T-cell (primary cell): ENCODE measurements at regions of chr5 and their contacts with region 1.

Region 1: DNA sequence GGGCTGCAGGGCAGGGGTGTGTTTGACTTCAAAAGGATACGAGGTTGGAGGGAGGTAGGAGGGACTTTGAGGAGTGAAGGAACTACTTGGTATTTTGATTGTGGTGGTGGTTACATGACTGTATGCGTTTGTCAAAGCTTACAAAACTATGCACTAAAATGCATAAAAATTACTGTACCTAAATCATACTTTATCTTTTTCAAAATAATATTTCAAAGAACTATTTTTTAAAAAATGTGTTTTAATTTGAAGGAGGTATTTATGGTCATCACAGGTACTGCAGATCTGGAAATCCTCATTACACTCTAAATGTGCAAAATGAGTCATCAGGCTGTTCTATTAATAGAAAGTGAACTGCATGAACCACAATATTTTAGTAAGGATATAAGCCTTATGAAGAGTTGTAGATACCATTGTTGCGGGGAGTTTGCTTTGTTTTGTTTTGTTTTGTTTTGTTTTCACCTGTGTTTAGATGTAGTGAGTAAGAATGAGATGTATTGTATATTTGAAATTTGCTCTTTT is 116.9 kb downstream of the ARRDC3 start:
- DNase-seq: peak in 1 of 35 experiments; percentile 8
- ATAC-seq: peak; percentile 37 to 57 (median 50)
- H3K4me3 ChIP-seq: no peak overlapping the region
- H3K4me3 Mint-ChIP-seq: no peak overlapping the region
- H3K27ac ChIP-seq: no peak overlapping the region
- H3K27ac Mint-ChIP-seq: peak overlapping the region in 1 of 2 donors; percentile 10
- H3K4me1 ChIP-seq: peaks cover 10 to 14% of the 10 kb centered on the region in 2 experiments
- H3K4me1 Mint-ChIP-seq: peaks cover 16 to 24% (median 20%) of the 10 kb centered on the region in 3 donors
- H3K27me3 ChIP-seq: no peaks in the 10 kb centered on the region
- H3K27me3 Mint-ChIP-seq: no peaks in the 10 kb centered on the region

Region 2: DNA sequence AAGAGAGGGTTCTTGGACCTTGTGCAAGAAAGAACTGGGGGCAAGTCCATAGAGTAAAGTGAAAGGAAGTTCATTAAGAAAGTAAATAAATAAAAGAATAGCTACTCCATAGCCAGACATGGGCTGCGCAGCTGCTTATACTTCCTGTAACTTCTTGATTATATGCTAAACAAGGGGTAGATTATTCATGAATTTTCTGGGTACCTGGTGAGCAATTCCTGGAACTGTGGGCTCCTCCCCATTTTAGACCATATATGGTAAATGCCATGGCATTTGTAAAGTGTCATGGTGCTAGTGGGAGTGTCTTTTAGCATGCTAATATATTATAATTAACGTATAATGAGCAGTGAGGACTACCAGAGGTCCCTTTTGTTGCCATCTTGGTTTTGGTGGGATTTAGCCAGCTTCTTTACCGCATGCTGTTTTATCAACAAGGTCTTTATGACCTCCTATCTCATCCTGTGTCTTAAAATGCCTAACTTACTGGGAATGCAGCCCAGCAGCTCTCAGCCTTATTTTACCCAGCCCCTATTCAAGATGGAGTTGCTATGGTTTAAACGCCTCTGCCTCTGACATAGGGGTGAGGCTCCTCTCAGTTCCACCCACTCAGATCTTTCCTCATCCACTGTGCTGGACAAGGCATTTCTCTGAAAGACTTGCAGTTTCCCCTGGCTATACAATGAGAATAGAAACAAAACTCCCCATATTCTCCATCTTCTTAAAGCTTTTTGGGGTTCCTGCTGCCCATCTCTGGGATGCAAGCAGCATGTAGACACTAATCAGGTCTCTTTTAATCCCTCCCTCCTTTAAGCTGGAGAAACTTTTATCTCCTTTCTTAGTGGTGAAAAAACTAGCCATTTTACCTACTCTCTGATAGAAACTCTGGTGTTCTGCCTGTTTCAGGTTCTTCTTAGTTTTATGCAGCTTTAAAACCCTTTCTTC is 25.7 kb after region 1 on chr5:
- CTCF ChIA-PET with region 1: no interaction called
- POLR2A ChIA-PET with region 1: interaction called in 1 of 2 experiments, 10 read pairs
- DNase-seq: no peak
- ATAC-seq: no peak
- H3K4me3 ChIP-seq: no peak overlapping the region
- H3K4me3 Mint-ChIP-seq: no peak overlapping the region
- H3K27ac ChIP-seq: no peak overlapping the region
- H3K27ac Mint-ChIP-seq: peak overlapping the region in 1 of 2 donors; percentile 2
- H3K4me1 ChIP-seq: no peaks in the 10 kb centered on the region
- H3K4me1 Mint-ChIP-seq: no peaks in the 10 kb centered on the region
- H3K27me3 ChIP-seq: peaks cover 0 to 3% of the 10 kb centered on the region in 2 experiments
- H3K27me3 Mint-ChIP-seq: peaks cover 0 to 2% of the 10 kb centered on the region in 2 donors

Region 3: DNA sequence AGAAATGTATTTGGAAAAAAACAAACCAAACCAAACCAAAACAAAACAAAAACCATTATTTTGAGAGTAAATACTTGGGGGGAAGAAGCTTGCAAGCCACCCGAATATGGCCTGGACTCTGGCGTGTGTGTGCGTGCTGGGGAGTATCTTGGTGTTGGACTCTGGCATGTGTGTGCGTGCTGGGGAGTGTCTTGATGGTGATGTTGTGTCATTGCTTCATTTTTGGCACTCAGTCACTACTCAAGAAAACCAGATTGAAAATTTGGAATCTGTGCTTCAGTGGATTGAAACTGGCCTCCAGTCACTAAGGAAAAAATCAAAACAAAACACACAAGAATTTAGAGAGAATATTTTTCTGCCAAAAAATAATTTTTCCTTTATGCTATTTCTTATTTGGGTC is 40.8 kb after region 1 on chr5:
- CTCF ChIA-PET with region 1: no interaction called
- POLR2A ChIA-PET with region 1: no interaction called
- DNase-seq: no peak
- ATAC-seq: no peak
- H3K4me3 ChIP-seq: no peak overlapping the region
- H3K4me3 Mint-ChIP-seq: no peak overlapping the region
- H3K27ac ChIP-seq: no peak overlapping the region
- H3K27ac Mint-ChIP-seq: no peak overlapping the region
- H3K4me1 ChIP-seq: peaks cover 11 to 22% of the 10 kb centered on the region in 2 experiments
- H3K4me1 Mint-ChIP-seq: peaks cover 15 to 22% (median 21%) of the 10 kb centered on the region in 3 donors
- H3K27me3 ChIP-seq: no peaks in the 10 kb centered on the region
- H3K27me3 Mint-ChIP-seq: no peaks in the 10 kb centered on the region

Region 4: DNA sequence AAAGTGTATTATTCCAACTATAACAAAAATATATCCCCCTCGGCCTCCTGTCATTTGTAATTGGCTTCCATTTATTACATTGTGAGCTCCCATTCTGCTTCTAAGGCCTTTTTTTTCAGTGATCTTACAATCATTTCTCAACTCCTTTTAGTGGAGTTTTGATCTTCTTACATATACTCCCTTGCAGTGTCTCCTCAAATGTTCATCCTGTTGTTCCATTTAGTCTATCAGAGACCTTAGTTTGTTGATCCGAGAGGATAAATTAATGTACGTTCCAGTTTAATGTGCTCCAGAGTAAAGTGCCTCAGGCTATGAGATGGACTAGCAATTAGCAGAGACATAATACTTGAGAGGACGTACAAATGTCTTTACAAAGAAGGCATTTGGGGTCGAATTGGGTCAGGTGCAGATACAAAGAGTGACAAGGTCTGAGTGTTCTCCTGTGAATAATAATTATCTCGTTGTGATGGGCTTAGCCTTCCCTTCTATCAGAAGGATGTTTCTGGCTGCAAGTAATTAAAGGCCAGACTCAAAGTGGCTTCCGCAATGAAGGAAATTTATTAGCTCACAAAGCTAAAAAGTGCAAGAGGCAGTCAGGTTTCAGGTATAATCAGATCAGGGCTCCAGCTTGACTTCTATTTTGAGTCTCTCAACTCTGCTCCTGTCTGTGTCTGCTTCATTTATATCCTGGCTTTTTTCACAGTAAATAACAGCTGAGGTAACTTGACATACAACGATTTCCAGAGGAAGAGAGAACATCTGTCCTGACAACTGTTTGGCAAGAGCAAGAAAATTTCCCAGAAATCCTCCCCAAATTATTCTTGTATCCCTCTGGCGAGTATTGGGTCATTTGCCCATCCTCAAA is 86.8 kb after region 1 on chr5:
- CTCF ChIA-PET with region 1: no interaction called
- POLR2A ChIA-PET with region 1: no interaction called
- DNase-seq: no peak
- ATAC-seq: no peak
- H3K4me3 ChIP-seq: no peak overlapping the region
- H3K4me3 Mint-ChIP-seq: no peak overlapping the region
- H3K27ac ChIP-seq: no peak overlapping the region
- H3K27ac Mint-ChIP-seq: no peak overlapping the region
- H3K4me1 ChIP-seq: no peaks in the 10 kb centered on the region
- H3K4me1 Mint-ChIP-seq: peaks cover 0 to 6% (median 5%) of the 10 kb centered on the region in 3 donors
- H3K27me3 ChIP-seq: peaks cover 0 to 3% of the 10 kb centered on the region in 2 experiments
- H3K27me3 Mint-ChIP-seq: peaks cover 0 to 3% of the 10 kb centered on the region in 2 donors